MCF 10A (cell line): ENCODE measurements at regions of chr7 and their contacts with region 1.

Region 1: DNA sequence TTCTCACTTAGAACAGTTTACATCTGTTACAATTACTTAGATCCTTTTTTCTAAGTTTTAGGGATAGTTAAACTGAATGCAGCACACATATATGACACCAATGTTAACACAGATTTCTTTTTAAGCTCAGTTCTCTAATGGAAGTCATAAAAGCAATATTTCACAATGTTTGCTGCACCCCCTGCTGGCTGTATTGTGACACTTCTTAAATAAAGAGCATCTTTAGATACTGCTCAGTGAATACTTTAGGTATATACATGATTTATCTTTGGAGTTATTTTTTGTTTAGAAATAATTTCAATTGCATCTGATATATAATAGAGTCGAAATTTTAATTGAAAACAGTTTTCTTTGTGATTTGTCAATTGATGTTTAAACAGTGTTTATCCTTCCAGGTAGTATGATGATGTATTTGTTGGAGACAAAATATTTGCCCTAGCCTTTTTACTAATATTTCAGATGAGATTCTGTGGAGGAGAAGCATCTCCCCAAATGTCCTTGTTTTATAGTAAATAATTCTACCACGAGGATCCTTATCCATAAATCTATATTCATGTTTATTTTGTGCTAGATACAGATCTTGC is 174.4 kb downstream of the ST7 start:
- DNase-seq: peak; percentile 73
- H3K4me3 Mint-ChIP-seq: no peak overlapping the region
- H3K27ac Mint-ChIP-seq: no peak overlapping the region
- H3K4me1 Mint-ChIP-seq: peaks cover 18% of the 10 kb centered on the region
- H3K27me3 Mint-ChIP-seq: no peaks in the 10 kb centered on the region
- CTCF ChIP-seq: peak; percentile 72

Region 2: DNA sequence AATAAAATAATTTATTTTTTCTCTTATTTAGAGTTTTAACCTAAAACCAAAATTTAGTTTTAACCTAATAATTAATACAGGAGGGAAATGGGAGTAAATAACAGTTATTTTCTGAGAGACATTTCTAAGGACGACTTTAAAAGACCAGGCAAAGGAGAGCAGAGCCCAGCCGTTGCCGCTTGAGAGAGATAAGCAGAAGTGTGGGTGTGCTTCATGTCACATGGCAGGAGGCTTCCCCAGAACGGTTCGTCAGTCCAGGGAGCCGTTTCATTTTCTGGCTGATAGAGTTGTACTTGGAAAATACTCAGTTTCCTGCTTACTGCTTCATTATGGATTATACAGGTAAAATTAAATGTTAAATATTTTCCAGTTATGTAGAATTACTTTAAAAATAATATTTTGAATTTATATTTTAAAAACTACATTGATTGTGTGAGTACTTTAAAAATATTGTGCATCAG is 113.0 kb before region 1 on chr7:
- CTCF ChIA-PET with region 1: interaction called, 12 read pairs
- POLR2A ChIA-PET with region 1: no interaction called
- intact Hi-C with region 1: no loop called
- DNase-seq: no peak
- H3K4me3 Mint-ChIP-seq: no peak overlapping the region
- H3K27ac Mint-ChIP-seq: no peak overlapping the region
- H3K4me1 Mint-ChIP-seq: peaks cover 12% of the 10 kb centered on the region
- H3K27me3 Mint-ChIP-seq: no peaks in the 10 kb centered on the region
- CTCF ChIP-seq: no peak

Region 3: GRCh38 chr7:117110480-117111337 is 17.0 kb before region 1 on chr7:
- CTCF ChIA-PET with region 1: interaction called, 29 read pairs
- POLR2A ChIA-PET with region 1: no interaction called
- intact Hi-C with region 1: no loop called
- DNase-seq: no peak
- H3K4me3 Mint-ChIP-seq: no peak overlapping the region
- H3K27ac Mint-ChIP-seq: no peak overlapping the region
- H3K4me1 Mint-ChIP-seq: no peaks in the 10 kb centered on the region
- H3K27me3 Mint-ChIP-seq: no peaks in the 10 kb centered on the region
- CTCF ChIP-seq: no peak

Region 4: GRCh38 chr7:117157241-117158209 is 29.8 kb after region 1 on chr7:
- CTCF ChIA-PET with region 1: interaction called, 11 read pairs
- POLR2A ChIA-PET with region 1: no interaction called
- intact Hi-C with region 1: no loop called
- DNase-seq: peak; percentile 83
- H3K4me3 Mint-ChIP-seq: no peak overlapping the region
- H3K27ac Mint-ChIP-seq: no peak overlapping the region
- H3K4me1 Mint-ChIP-seq: no peaks in the 10 kb centered on the region
- H3K27me3 Mint-ChIP-seq: no peaks in the 10 kb centered on the region
- CTCF ChIP-seq: no peak